Ascending aorta (tissue), 2 donors: ENCODE measurements at regions of chr1 and their contacts with region 1.

Region 1: DNA sequence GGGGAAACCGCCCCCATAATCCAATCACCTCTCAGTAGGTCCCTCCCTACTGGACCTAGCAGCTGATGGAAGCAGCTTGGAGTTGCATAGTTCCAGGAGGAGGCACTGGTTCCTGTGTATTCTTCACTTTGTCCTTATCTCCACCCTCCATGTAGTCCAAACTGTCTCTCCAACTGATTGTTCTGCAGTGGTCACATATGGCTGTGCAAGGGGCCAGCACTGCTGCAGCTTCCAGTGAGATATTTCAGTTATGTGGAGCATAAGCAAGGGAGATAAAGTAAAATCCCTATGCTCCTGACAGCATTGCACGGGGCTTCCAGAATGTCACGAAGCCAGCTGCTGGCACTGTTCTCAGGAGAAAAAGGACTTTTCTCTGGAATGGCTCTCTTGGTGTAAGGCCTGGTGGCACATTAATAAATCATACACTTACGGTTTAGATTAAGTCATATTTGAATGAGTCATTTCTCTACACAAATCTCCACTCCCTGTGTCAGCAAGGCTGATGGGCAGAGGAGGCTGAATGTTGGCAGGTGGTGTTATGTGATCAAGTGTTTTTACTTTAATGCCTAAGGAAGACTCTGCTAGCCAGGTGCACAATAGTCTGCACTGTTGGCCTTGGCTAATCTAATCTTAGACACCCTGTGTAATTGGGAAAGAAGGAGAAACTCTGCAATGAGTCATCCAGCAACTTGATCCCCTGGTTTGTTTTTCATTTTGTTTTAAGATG is 93.4 kb downstream of the KCNK1 start:
- DNase-seq: no peak
- H3K4me3 ChIP-seq: no peak overlapping the region
- H3K27ac ChIP-seq: peak overlapping the region in 1 of 2 donors; percentile 34
- H3K4me1 ChIP-seq: peaks cover 5 to 8% of the 10 kb centered on the region in 2 donors
- H3K27me3 ChIP-seq: no peaks in the 10 kb centered on the region
- CTCF ChIP-seq: no peak

Region 2: DNA sequence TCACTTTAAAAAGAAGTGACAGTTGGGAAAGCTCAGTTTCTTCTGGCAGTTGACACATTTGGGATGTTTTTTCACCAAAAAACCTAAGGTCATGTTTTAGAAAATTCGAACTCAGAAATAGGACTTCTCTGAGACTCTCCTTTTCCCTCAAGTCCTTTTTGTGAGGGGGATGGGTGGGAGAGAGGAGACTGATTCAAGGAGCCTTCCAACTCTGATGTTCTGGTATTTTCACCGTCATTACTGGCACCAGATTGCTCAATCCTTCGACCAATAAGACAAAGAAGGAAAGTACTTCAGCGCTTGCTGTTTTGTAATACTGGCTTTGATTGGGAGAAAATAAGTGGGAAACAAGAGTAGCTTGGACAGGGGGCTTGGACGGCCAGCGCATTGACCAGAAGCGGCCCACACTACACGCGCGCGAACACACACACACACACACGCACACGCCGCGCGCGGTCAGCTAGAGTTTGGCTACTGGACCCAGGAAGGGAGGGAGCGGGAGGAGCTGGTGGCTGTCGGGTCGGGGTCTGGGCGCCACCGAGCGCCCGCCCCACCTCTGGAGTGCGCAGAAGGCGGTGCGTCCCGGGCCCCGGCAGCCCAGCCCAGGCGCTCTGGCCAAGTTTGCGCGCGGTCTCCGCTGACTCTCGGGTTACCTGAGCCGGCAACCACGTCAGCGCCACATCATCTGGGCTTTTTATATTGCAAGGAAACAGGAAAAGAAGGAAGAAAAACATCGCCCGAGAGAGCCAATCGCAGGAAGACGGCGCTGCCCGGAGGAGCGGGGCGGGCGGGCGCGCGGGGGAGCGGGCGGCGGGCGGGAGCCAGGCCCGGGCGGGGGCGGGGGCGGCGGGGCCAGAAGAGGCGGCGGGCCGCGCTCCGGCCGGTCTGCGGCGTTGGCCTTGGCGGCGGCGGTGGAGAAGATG is 93.8 kb before region 1 on chr1 and contains the start of gene KCNK1:
- intact Hi-C with region 1: loop called (anchors 10 kb)
- DNase-seq: peak; percentile 16 to 83
- H3K4me3 ChIP-seq: peak within 1 kb of the TSS; percentile 73 to 85
- H3K27ac ChIP-seq: peak within 1 kb of the TSS; percentile 70 to 72
- H3K4me1 ChIP-seq: no peaks in the 10 kb centered on the region
- H3K27me3 ChIP-seq: no peaks in the 10 kb centered on the region
- CTCF ChIP-seq: no peak
- total RNA-seq, gene KCNK1: 1.4 TPM

Region 3: DNA sequence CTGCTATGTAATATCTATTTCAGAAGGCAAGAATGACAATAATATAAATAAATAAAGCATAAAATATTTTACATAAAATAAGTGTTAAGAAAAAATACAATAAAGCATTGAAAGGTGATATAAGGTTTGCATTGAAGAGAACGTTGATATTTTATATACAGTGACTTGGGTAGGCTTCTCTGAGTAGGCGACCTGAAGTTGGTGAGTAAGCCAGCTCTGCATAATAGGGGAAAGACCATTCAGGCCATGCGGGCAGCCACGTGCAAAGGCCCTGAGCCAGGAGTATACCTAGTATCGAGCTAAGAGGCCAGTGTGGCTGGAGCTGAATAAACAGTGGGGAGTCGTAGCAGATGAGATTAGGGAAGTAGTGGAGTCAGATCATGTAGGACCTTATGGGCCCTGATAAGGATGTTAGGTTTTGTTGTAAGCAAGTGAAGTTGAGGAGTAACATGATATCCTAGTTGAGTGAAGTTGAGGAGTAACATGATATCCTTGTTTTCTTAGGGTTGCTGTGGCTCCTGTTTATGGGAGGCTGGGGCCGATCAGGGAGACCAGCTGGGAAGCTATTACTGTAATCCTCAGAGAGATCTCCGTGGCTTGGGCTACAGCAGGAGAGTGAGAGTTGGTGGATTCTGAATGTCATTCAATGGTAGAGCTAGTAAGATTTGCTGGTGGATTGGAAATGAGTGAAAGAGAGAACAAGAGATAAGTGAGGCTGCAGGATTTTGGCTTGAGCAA is 71.4 kb before region 1 on chr1:
- intact Hi-C with region 1: no loop called
- DNase-seq: no peak
- H3K4me3 ChIP-seq: no peak overlapping the region
- H3K27ac ChIP-seq: no peak overlapping the region
- H3K4me1 ChIP-seq: no peaks in the 10 kb centered on the region
- H3K27me3 ChIP-seq: no peaks in the 10 kb centered on the region
- CTCF ChIP-seq: no peak

Region 4: GRCh38 chr1:233668725-233669294 is 38.5 kb before region 1 on chr1:
- intact Hi-C with region 1: loop called (anchors 5 kb)
- DNase-seq: no peak
- H3K4me3 ChIP-seq: no peak overlapping the region
- H3K27ac ChIP-seq: peak overlapping the region in 1 of 2 donors; percentile 4
- H3K4me1 ChIP-seq: peaks cover 0 to 9% of the 10 kb centered on the region in 2 donors
- H3K27me3 ChIP-seq: no peaks in the 10 kb centered on the region
- CTCF ChIP-seq: no peak